ENCODE measurements at regions of chr16 and their contacts with region 1.

Region 1: DNA sequence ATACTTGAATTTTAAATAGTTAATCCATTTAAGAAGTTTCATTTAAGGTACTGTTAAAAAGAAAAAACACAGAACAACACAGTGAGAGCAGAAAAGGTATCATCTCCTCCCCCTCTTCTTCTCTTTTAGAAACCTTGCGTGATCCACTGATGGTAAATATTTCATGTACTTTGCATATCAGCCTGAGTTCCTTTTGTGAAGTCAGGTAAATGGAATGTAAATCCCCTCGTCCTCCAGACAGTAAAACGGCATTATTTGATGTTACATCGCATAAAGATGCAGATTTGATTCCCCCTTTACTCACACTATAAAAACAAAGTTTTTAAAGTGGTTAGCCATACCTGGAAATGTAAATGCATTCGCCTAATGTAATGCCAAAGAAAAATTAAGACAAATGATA is 234.4 kb downstream of the WWOX start:
- DNase-seq: no peak
- H3K4me3 Mint-ChIP-seq: no peak overlapping the region
- H3K27ac Mint-ChIP-seq: no peak overlapping the region
- H3K4me1 Mint-ChIP-seq: no peaks in the 10 kb centered on the region
- H3K27me3 Mint-ChIP-seq: no peaks in the 10 kb centered on the region

Region 2: GRCh38 chr16:78310990-78311561 is 22.7 kb before region 1 on chr16:
- CTCF ChIA-PET with region 1: no interaction called
- intact Hi-C with region 1: no loop called
- DNase-seq: no peak
- H3K4me3 Mint-ChIP-seq: no peak overlapping the region
- H3K27ac Mint-ChIP-seq: no peak overlapping the region
- H3K4me1 Mint-ChIP-seq: peaks cover 5% of the 10 kb centered on the region
- H3K27me3 Mint-ChIP-seq: no peaks in the 10 kb centered on the region

Region 3: GRCh38 chr16:78353610-78354275 is 19.9 kb after region 1 on chr16:
- CTCF ChIA-PET with region 1: no interaction called
- intact Hi-C with region 1: loop called (anchors 1 kb)
- DNase-seq: no peak
- H3K4me3 Mint-ChIP-seq: no peak overlapping the region
- H3K27ac Mint-ChIP-seq: no peak overlapping the region
- H3K4me1 Mint-ChIP-seq: no peaks in the 10 kb centered on the region
- H3K27me3 Mint-ChIP-seq: no peaks in the 10 kb centered on the region

Region 4: GRCh38 chr16:78659216-78659942 is 325.6 kb after region 1 on chr16:
- CTCF ChIA-PET with region 1: no interaction called
- intact Hi-C with region 1: no loop called
- DNase-seq: no peak
- H3K4me3 Mint-ChIP-seq: no peak overlapping the region
- H3K27ac Mint-ChIP-seq: no peak overlapping the region
- H3K4me1 Mint-ChIP-seq: no peaks in the 10 kb centered on the region
- H3K27me3 Mint-ChIP-seq: no peaks in the 10 kb centered on the region

Measured in activated naive CD4-positive, alpha-beta T cell treated with anti-CD3 and anti-CD28 coated beads for 36 hours (primary cell).